ENCODE measurements at regions of chr15 and their contacts with region 1.

Region 1: DNA sequence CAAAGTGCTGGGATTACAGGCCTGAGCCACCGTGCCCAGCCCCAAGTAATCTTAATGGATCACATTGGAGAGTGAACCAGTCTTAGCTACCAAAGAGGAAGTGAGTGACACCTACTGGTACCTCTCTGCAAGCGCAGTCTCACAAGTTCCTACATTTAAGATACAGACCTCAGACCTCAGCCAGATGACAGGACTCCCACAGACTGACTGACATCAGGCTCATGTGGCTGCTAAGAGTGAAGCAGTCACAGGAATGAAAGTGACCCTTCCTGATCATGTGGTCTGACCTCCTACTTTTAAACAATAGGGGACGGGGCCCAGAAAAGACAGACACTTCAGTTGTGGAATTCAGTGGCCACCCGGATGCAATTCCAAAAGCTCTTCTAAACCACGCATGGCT is 36.3 kb upstream of the GNB5 start:
- DNase-seq: peak; percentile 87 to 93
- ATAC-seq: peak; percentile 98
- H3K4me3 ChIP-seq: no peak overlapping the region
- H3K27ac ChIP-seq: no peak overlapping the region
- H3K4me1 ChIP-seq: 0 out of 3 replicates have a peak, but pooled peaks cover 4% of the 10 kb centered on the region
- CTCF ChIP-seq: peak; percentile 68
- EP300 ChIP-seq: no peak
- POLR2A ChIP-seq: no peak
- RAD21 ChIP-seq: peak; percentile 71 to 74

Region 2: DNA sequence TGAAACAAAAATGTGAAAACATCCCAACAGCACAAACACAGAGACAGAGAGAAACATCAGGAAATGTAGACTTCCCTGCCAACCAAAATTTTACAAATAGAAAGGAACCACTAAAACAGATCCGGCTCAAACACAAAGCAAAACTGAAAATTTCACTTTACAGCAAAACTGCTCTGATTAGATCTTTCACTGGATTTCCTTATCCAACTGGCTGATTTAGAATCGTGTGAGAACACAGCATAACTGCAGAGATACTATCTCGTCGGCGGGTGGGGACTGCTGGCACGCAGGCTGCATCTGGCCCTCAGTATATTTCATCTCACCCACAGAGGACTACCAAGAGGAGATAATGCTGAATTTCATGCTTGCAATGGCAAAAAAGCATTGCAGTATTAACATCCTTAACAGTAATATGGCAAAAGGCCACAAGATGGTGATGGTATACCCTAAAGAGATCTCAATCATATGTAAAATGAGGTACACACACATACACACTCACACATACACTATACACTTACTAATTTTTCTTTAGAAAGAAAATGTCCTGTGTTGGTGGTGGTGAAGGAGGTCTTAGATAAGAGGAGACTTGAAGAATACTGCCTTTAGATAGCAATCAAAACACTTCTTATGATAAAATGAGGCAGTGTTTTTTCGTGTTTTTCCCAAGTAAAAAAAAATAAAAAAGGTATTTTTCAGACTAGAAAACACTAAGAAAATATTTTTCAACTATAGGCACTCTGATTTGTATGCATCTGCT is 245.3 kb before region 1 on chr15:
- CTCF ChIA-PET with region 1: interaction called, 27 read pairs
- POLR2A ChIA-PET with region 1: no interaction called
- DNase-seq: peak; percentile 83 to 89
- ATAC-seq: peak; percentile 94 to 96
- H3K4me3 ChIP-seq: peak overlapping the region; percentile 25; the same call in 2 of the 3 replicates
- H3K27ac ChIP-seq: peak overlapping the region; percentile 81 to 87
- H3K4me1 ChIP-seq: peaks cover 22% of the 10 kb centered on the region
- CTCF ChIP-seq: peak; percentile 97
- EP300 ChIP-seq: no peak
- POLR2A ChIP-seq: no peak
- RAD21 ChIP-seq: peak; percentile 96 to 98

Region 3: GRCh38 chr15:52186651-52187486 is 40.6 kb before region 1 on chr15:
- CTCF ChIA-PET with region 1: interaction called, 29 read pairs
- POLR2A ChIA-PET with region 1: no interaction called
- DNase-seq: no peak
- ATAC-seq: no peak
- H3K4me3 ChIP-seq: no peak overlapping the region
- H3K27ac ChIP-seq: no peak overlapping the region
- H3K4me1 ChIP-seq: no peaks in the 10 kb centered on the region
- CTCF ChIP-seq: no peak
- EP300 ChIP-seq: no peak
- POLR2A ChIP-seq: no peak
- RAD21 ChIP-seq: no peak

Region 4: DNA sequence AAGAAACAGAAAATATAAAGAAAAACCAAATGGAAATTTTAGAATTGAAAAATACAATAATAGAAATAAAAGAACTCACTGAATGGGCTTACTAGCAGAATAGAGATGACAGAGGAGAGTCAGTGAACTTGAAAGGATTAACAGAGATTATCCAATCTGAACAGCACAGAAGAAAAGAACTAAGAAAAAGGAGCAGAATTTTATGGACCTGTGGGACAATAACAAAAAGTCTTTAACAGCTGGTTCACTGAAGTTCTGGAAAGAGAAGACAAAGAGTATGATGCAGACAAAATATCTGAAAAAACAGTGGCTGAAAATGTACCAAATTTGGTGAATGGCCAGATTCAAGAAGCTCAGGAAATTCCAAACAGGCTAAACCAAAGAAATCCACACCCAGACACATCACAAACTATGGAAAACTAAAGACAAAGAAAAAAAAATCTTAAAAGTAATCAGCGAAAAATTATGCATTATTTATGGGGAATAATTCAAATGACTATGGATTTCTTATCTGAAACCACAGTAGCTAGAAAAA is 26.6 kb before region 1 on chr15:
- CTCF ChIA-PET with region 1: interaction called, 21 read pairs
- POLR2A ChIA-PET with region 1: no interaction called
- DNase-seq: no peak
- ATAC-seq: no peak
- H3K4me3 ChIP-seq: no peak overlapping the region
- H3K27ac ChIP-seq: no peak overlapping the region
- H3K4me1 ChIP-seq: no peaks in the 10 kb centered on the region
- CTCF ChIP-seq: no peak
- EP300 ChIP-seq: no peak
- POLR2A ChIP-seq: no peak
- RAD21 ChIP-seq: no peak

Region 5: GRCh38 chr15:52217186-52217585 is 10.3 kb before region 1 on chr15:
- CTCF ChIA-PET with region 1: interaction called, 67 read pairs
- POLR2A ChIA-PET with region 1: no interaction called
- DNase-seq: peak; percentile 21 to 44
- ATAC-seq: peak; percentile 75 to 89; a peak in 4 of 6 replicates
- H3K4me3 ChIP-seq: no peak overlapping the region
- H3K27ac ChIP-seq: no peak overlapping the region
- H3K4me1 ChIP-seq: no peaks in the 10 kb centered on the region
- CTCF ChIP-seq: peak; percentile 41
- EP300 ChIP-seq: no peak
- POLR2A ChIP-seq: no peak
- RAD21 ChIP-seq: peak; percentile 29 to 54; a peak in 4 of 5 replicates

Region 6: DNA sequence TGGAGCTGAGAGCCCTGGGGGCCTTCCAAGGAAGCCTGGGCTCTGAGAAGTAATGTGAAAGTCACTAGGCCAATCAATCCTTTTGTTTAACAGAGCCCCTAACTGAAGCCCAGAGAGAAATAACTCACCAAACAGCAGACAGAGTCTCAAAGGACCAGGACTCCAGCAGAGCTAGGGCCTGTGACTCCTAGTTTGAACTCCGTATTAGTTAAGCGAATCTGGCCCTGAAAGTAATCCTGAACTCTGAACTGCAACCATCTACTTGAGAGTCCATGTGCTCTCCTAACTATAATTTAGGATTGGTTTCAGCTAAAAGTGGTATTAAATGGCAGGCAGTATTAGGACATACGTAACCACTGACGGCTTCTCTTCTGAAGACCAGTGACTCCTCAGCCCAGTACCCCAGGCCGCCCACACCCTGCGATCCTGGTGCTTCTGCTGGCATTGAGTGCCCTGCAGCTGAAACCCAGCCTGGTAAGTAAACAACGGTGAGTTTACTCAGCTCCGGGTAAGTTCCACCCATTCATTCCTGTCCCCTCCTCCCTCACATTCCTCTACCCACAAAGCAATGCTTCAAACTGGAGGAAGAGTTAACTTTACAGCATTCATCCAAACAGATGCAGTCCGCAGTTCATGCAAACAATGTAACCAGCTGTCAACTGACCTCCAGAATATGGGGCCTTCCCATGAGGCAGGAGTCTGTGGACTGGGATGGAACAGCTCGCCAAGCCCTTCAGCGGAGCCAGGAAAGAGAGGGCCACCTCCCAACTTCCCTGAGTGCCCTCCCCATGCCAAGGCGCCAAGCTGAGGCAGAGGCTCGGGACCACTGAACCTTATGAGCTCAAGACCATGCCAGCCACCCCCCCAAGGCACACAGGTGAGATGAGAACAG is 60.8 kb after region 1 on chr15:
- CTCF ChIA-PET with region 1: no interaction called
- POLR2A ChIA-PET with region 1: no interaction called
- DNase-seq: peak; percentile 97 to 99
- ATAC-seq: peak; percentile 94 to 97
- H3K4me3 ChIP-seq: peak overlapping the region; percentile 22
- H3K27ac ChIP-seq: peak overlapping the region; percentile 87 to 93
- H3K4me1 ChIP-seq: peaks cover 54% of the 10 kb centered on the region
- CTCF ChIP-seq: no peak
- EP300 ChIP-seq: peak in 1 of 2 experiments; percentile 63; a peak in 2 of 5 replicates
- POLR2A ChIP-seq: peak; percentile 63
- RAD21 ChIP-seq: peak; percentile 3 to 20; a peak in 1 of 5 replicates